Sigmoid colon (tissue), 7 donors: ENCODE measurements at regions of chr16 and their contacts with region 1.

Region 1: DNA sequence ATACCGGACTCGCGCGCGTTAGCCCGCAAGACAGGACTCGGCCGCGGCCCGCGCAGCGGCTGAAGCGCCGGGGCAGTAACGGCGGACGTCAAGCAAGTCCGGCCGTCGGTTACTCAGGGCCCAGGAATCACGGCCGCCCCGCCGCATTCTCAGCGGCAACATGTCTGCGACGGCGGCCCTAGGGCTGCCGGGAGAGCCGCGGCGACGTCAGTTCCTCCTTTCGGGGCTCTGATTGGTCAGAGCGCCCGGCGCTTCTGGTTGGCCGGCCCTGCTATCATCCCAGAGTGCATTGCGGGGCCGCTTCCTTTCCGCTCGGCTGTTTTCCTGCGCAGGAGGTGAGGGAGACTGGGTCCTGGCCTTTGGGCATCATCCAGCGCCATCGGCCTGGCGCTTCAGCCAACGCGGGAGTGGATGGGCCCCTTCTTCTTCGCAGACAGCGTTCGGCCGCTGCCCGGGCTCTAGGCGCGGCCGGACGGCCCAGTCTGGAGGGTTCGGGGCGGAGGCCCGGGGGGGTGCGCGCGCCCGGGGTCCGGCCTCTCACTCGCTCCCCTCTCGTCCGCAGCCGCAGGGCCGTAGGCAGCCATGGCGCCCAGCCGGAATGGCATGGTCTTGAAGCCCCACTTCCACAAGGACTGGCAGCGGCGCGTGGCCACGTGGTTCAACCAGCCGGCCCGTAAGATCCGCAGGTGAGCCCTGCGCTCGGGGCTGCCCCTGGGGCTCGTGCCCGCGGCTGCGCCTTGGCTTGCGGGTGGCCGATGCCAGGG is at the start of gene RPL13:
- DNase-seq: peak; percentile 98
- H3K4me3 ChIP-seq: peak within 1 kb of the TSS; percentile 75 to 88 (median 81)
- H3K27ac ChIP-seq: peak within 1 kb of the TSS; percentile 96 to 99 (median 98)
- H3K4me1 ChIP-seq: peaks cover 0 to 45% (median 34%) of the 10 kb centered on the region in 4 donors
- H3K27me3 ChIP-seq: no peaks in the 10 kb centered on the region
- CTCF ChIP-seq: no peak
- EP300 ChIP-seq: no peak
- POLR2A ChIP-seq: peak; percentile 97 to 99
- total RNA-seq, gene RPL13: 7,351 to 19,173 (median 8,010) TPM

Region 2: DNA sequence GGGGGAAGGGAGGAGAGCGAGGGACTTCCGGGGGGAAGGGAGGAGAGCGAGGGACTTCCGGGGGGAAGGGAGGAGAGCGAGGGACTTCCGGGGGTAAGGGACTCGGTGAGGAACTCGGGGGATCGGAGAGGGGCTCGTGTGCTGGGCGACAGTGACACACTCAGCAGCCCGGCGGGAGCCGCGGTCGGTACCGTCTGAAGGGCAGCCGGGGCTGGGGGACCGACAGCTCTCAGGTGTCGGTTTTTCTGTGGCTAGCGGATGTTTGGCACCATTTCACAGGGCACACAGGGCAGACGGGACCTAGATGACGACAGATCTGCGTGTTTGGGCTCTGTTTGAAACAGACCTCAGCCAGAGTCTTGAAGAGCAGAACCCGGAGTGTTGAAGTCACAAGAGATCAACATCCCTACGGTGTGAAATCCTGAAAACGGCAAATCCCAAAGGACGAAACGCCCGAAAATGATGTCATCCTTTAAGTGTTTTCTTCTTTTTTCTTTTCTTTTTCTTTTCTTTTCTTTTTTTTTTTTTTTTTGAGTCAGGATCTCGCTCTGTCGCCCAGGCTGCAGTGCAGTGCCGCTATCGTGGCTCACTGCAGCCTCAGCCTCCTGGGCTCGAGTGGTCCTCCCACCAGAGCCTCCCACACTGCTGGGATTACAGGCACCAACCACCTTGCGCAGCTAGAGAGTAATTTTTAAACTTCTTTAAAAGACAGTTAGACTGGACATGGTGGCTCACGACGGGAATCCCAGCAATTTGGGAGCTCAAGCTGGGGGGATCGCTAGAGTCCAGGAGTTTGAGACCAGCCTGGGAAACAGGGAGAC is 319.2 kb before region 1 on chr16:
- intact Hi-C with region 1: loop called (anchors 2 kb)
- DNase-seq: peak; percentile 89
- H3K4me3 ChIP-seq: peak overlapping the region; percentile 60 to 71 (median 64)
- H3K27ac ChIP-seq: peak overlapping the region; percentile 86 to 96 (median 94)
- H3K4me1 ChIP-seq: peaks cover 0 to 11% (median 6%) of the 10 kb centered on the region in 4 donors
- H3K27me3 ChIP-seq: no peaks in the 10 kb centered on the region
- CTCF ChIP-seq: no peak
- EP300 ChIP-seq: no peak
- POLR2A ChIP-seq: peak; percentile 78 to 80

Region 3: DNA sequence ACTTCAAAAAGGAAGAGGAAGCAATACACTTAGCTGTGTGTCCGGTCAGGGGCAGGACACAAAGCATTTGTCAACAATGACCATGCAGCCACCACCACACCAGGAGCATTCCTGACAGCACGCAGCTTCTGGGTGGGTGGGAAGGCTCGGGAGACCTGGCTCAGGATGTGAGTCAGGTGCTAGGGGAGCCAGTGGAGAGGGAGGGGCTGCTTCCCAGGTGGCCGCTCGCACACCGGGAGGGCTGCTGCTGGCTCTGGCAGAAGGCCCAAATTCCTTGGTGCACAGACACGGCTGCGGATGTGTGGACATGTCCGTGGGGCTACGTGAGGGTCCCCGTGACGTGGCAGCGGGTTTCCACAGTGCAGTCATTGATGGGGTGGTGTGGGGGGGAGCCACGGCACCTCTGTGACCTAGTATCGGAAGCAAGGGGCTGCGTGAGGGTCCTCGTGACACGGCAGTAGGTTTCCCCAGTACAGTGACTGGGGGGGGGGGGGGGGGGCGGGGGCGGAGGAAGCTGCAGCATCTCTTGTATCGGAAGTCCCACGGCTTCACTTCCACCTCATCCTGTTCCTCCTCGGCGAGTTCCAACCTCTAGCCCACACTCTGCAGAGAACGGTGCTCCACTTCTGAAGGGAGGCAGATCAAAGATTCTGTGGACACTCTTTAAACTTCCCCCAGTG is 230.2 kb before region 1 on chr16:
- intact Hi-C with region 1: loop called (anchors 5 kb)
- DNase-seq: no peak
- H3K4me3 ChIP-seq: no peak overlapping the region
- H3K27ac ChIP-seq: peak overlapping the region in 3 of 4 donors; percentile 23 to 51 (median 46)
- H3K4me1 ChIP-seq: peaks cover 0 to 67% (median 62%) of the 10 kb centered on the region in 4 donors
- H3K27me3 ChIP-seq: no peaks in the 10 kb centered on the region
- CTCF ChIP-seq: no peak
- EP300 ChIP-seq: no peak
- POLR2A ChIP-seq: no peak

Region 4: DNA sequence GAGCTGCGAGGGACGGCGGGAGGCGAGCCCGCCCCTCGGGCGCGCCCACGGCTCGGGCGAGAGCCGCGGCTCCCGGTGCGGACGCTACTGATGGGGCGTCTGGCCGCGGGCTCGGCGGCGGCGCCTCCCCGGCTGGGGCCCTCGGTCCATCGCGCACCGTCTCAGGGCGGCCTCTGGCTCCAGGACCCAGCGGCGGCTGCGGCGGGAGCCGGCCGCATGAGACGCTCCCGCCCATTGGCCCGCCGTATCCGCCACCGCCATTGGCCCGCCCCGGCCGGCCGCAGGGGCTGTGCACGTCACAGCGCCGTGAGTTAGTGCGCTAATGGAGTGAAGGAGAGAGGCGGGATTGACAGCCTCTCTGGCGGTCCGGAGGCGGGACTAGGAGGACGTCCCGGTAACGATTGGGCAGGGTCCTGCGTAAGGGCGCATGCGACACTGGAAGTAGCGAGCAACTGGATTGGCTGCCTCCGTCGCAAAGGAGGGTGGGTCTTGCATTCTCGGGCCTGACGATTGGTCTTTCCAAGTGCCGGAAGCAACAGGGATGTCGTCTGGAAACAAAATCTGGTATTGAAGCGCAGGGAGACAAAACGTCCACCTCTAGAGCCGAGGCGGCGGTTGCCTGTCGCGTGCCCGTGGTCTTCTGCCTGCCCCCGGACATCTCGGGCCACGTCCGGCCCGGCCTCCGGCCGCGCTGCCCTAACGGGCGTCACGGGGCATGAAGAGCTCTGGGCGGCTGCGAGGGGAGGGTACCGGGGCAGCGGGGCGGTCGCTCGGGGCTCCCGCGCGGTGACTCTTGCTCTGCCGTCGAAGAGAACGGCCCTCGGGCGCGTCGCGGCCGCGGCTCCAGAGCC is 69.9 kb before region 1 on chr16 and contains the start of gene ANKRD11:
- intact Hi-C with region 1: loop called (anchors 5 kb)
- DNase-seq: peak; percentile 100
- H3K4me3 ChIP-seq: peak within 1 kb of the TSS; percentile 69 to 98 (median 95)
- H3K27ac ChIP-seq: peak within 1 kb of the TSS; percentile 95 to 100 (median 98)
- H3K4me1 ChIP-seq: peaks cover 0 to 48% (median 42%) of the 10 kb centered on the region in 4 donors
- H3K27me3 ChIP-seq: no peaks in the 10 kb centered on the region
- CTCF ChIP-seq: no peak
- EP300 ChIP-seq: no peak
- POLR2A ChIP-seq: peak; percentile 37 to 44
- total RNA-seq, gene ANKRD11: 42.6 to 161 (median 48.8) TPM

Region 5: GRCh38 chr16:89507834-89508590 is 52.5 kb before region 1 on chr16 and contains the start of gene SPG7:
- intact Hi-C with region 1: loop called (anchors 5 kb)
- DNase-seq: peak; percentile 90
- H3K4me3 ChIP-seq: peak within 1 kb of the TSS; percentile 68 to 90 (median 74)
- H3K27ac ChIP-seq: peak within 1 kb of the TSS; percentile 89 to 96 (median 93)
- H3K4me1 ChIP-seq: peaks cover 0 to 38% (median 32%) of the 10 kb centered on the region in 4 donors
- H3K27me3 ChIP-seq: no peaks in the 10 kb centered on the region
- CTCF ChIP-seq: no peak
- EP300 ChIP-seq: no peak
- POLR2A ChIP-seq: peak; percentile 46 to 58
- total RNA-seq, gene SPG7: 69.4 to 211 (median 113) TPM

Region 6: DNA sequence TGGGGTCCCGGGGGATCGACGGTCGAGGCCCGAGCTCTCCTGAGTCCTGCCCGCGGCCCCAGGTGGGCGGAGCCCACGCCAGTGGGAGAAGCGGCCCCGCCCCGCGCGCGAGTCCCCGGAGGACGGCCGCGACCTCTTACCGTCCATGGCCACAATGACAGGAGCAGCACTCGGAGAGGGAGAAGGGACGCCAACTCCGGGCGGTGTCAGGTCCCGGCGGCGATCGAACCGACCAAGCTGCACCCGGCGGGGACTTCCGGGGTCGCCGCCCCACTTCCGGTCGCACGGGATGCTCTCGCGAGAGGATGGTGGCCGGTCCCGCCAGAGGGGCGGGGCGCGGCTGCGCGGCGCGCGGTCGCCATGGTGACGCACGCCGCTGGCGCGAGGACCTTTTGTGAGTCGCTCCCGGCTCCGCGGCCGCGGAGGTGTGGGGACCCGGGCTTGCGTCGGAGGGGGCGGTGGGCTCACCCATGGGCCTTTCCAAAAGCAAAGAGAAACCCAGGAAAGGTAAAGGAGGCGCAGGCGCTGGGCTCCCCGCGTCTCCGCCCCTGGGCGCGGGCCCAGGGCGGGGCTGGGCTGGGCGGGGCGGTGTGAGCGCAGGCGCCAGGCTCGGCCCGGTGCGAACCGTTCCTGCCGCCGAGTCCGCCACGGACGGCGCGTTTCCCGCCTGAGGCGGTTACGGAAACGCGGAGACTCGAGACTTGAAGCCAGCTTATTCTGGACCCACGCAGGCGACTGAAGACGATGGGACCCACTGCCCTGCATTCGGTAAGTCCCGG is 97.1 kb after region 1 on chr16 and contains the starts of genes CHMP1A and SPATA33:
- intact Hi-C with region 1: loop called (anchors 2 kb)
- DNase-seq: peak; percentile 94
- H3K4me3 ChIP-seq: peak within 1 kb of the TSS; percentile 93 to 99 (median 97)
- H3K27ac ChIP-seq: peak within 1 kb of the TSS; percentile 83 to 86 (median 84)
- H3K4me1 ChIP-seq: peaks cover 0 to 28% (median 23%) of the 10 kb centered on the region in 4 donors
- H3K27me3 ChIP-seq: no peaks in the 10 kb centered on the region
- CTCF ChIP-seq: no peak
- EP300 ChIP-seq: no peak
- POLR2A ChIP-seq: peak; percentile 23 to 25
- total RNA-seq, gene CHMP1A: 42.8 to 75.9 (median 59.3) TPM
- total RNA-seq, gene SPATA33: 1.4 to 7.7 (median 5.9) TPM